Calu3 (cell line): ENCODE measurements at regions of chr1 and their contacts with region 1.

Region 1: GRCh38 chr1:50684185-50684584 is 260.9 kb upstream of the DMRTA2 start:
- DNase-seq: no peak
- H3K4me3 Mint-ChIP-seq: no peak overlapping the region
- H3K27ac Mint-ChIP-seq: no peak overlapping the region
- H3K4me1 Mint-ChIP-seq: no peaks in the 10 kb centered on the region
- H3K27me3 Mint-ChIP-seq: no peaks in the 10 kb centered on the region
- CTCF ChIP-seq: no peak

Region 2: GRCh38 chr1:50750021-50750619 is 65.9 kb after region 1 on chr1:
- CTCF ChIA-PET with region 1: interaction called, 10 read pairs
- intact Hi-C with region 1: no loop called
- DNase-seq: peak; percentile 44
- H3K4me3 Mint-ChIP-seq: no peak overlapping the region
- H3K27ac Mint-ChIP-seq: no peak overlapping the region
- H3K4me1 Mint-ChIP-seq: peaks cover 7% of the 10 kb centered on the region
- H3K27me3 Mint-ChIP-seq: no peaks in the 10 kb centered on the region
- CTCF ChIP-seq: peak; percentile 47